ENCODE measurements at regions of chr5 and their contacts with region 1.

Region 1: DNA sequence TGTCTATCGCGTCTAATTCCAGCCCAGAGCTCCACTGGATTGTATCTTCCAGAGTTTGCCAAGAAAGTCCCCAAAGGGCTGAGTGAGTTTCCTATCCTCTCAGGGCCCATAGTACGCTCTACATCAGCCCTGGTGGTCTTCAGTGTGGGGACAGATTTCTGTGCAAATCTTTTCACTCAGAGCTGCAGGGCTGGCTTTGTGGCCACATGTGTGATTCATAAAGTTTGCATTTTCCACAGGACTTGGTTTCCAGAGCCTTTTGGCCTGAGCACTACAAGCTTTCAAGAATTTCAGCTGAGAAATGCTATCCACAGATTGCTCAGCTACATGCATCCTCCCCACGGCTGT is 76.7 kb upstream of the CXCL14 start:
- DNase-seq: no peak
- ATAC-seq: no peak
- H3K4me3 ChIP-seq: no peak overlapping the region
- H3K27ac ChIP-seq: no peak overlapping the region
- H3K4me1 ChIP-seq: no peaks in the 10 kb centered on the region
- CTCF ChIP-seq: no peak
- EP300 ChIP-seq: no peak
- POLR2A ChIP-seq: no peak
- RAD21 ChIP-seq: no peak

Region 2: DNA sequence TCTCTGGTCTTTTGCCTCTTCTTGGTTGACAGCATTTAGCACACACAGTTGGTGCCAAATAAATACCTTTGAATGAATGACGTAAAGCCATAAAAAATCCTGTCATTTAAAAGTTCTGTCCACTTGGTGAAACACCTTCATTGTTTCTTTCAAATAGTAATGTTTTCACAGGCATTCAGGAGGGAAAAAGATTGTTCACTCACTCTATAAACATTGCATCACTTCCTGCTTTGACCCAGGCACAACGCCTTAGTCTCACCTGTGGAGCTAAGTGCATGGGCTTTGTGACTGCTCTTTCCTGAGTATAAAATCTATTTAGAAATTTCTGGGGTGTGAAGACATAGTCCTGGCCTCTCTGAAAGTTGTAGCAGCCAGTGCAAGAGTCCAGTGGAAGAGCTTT is 12.2 kb after region 1 on chr5:
- CTCF ChIA-PET with region 1: interaction called, 12 read pairs
- POLR2A ChIA-PET with region 1: no interaction called
- DNase-seq: no peak
- ATAC-seq: no peak
- H3K4me3 ChIP-seq: no peak overlapping the region
- H3K27ac ChIP-seq: no peak overlapping the region
- H3K4me1 ChIP-seq: no peaks in the 10 kb centered on the region
- CTCF ChIP-seq: no peak
- EP300 ChIP-seq: no peak
- POLR2A ChIP-seq: no peak
- RAD21 ChIP-seq: no peak

Measured in A549 (cell line).